ENCODE measurements at regions of chr17 and their contacts with region 1.

Region 1: DNA sequence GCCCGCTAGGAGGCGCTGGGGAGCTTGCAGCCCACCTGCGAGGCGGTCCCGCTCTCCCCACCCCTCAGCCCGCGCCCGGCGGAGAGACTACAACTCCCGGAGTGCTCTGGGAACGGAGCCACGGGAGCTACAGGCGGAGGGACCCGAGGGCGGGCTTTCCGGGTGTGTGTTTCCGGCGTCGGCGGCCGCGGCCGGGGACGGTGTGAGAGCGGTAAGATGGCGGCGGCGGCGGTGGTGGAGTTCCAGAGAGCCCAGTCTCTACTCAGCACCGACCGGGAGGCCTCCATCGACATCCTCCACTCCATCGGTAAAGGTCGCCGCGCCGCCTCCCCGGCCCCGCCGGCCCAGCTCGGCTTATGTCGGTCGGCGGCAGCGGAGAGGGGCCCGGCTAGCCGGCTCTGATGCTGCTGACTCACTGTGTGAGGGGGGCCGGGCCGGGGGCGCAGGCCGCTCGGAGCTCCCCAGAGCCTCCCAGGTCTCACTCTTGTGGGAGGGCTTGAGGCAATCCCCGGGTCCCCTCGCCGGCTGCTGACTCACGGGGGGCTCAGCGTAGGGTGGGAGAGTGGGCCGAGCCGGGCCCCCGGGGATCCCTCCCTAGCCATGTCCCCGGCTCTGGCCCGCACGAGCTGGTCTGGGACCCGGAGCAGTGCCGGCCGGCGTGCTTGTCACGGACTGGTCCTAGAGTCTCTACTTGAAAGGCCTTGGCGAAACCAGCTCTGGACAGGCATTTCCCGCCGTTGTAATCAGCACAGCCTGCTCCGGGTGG is at the start of gene PSMD11:
- DNase-seq: peak; percentile 99
- ATAC-seq: peak; percentile 97
- H3K4me3 Mint-ChIP-seq: peak within 1 kb of the TSS; percentile 89
- H3K27ac Mint-ChIP-seq: peak within 1 kb of the TSS; percentile 65
- H3K4me1 Mint-ChIP-seq: peaks cover 28% of the 10 kb centered on the region
- H3K27me3 Mint-ChIP-seq: no peaks in the 10 kb centered on the region
- CTCF ChIP-seq: no peak
- total RNA-seq, gene PSMD11: 115 and 117 TPM in 2 replicates

Region 2: GRCh38 chr17:32349854-32350665 is 94.4 kb before region 1 on chr17 and contains the start of gene ZNF207:
- CTCF ChIA-PET with region 1: interaction called, 3 read pairs
- POLR2A ChIA-PET with region 1: interaction called, 12 read pairs
- intact Hi-C with region 1: loop called (anchors 1 kb)
- DNase-seq: peak; percentile 89
- ATAC-seq: peak; percentile 98
- H3K4me3 Mint-ChIP-seq: peak within 1 kb of the TSS; percentile 98
- H3K27ac Mint-ChIP-seq: peak within 1 kb of the TSS; percentile 99
- H3K4me1 Mint-ChIP-seq: peaks cover 40% of the 10 kb centered on the region
- H3K27me3 Mint-ChIP-seq: no peaks in the 10 kb centered on the region
- CTCF ChIP-seq: no peak
- total RNA-seq, gene ZNF207: 231 and 276 TPM in 2 replicates

Region 3: DNA sequence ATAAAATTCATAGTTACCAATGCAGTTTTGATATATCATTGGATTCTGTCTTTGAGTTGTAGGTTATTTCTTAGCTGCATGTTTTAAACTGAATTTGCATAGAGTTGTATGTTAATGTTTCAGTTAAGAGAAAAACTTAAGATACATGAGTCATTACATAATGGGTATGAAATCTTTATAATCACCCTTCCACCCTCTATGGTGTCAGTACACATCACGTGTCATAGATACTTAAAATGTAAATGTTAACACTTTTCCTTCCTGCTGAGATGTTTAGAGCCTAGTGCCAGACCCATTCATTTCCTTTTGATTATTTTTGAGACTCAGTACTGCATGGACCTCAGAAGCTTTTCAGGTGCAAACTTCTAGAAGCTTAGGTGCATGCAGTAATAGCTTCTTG is 74.1 kb before region 1 on chr17:
- CTCF ChIA-PET with region 1: no interaction called
- POLR2A ChIA-PET with region 1: interaction called, 5 read pairs
- intact Hi-C with region 1: loop called (anchors 5 kb)
- DNase-seq: no peak
- ATAC-seq: no peak
- H3K4me3 Mint-ChIP-seq: no peak overlapping the region
- H3K27ac Mint-ChIP-seq: no peak overlapping the region
- H3K4me1 Mint-ChIP-seq: peaks cover 4% of the 10 kb centered on the region
- H3K27me3 Mint-ChIP-seq: no peaks in the 10 kb centered on the region
- CTCF ChIP-seq: no peak

Measured in activated B cell treated with CpG ODN at 0.5 μM for 24 hours (primary cell).